ENCODE measurements at regions of chr6 and their contacts with region 1.

Region 1: GRCh38 chr6:71349395-71349794 is 60.8 kb downstream of the OGFRL1 start:
- DNase-seq: no peak
- H3K4me3 Mint-ChIP-seq: no peak overlapping the region
- H3K27ac Mint-ChIP-seq: no peak overlapping the region
- H3K4me1 Mint-ChIP-seq: no peaks in the 10 kb centered on the region
- H3K27me3 Mint-ChIP-seq: peaks cover 2% of the 10 kb centered on the region

Region 2: DNA sequence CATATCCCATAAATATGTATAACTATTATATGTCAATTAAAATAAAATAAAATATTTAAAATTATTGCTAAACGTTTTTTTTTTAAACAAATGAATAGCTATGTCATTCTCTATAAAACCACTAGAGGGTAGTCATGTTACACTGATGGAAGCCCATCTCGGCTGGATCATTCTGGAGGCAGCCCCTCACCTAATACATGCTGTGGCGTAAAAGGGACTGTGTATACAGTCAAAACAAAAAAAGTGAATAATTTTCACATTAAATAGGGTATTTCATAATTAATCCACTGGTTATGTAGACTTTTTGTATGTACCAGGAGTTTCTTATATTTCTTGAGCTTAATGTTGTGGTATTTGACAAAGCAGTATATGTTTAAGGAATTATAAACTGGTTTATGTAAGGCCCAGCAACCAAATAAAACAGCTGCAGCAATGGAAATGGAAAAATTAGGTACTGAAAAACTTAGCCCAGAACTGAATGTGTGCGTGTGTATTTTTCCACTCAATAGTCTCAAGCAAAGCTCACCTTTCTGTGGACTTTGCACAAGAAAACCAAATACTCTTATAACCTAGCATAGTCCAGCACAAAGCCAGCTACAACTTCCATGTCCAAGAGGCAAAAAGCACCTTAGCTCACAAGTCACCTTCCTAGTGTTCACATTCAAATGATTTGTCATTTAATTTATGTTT is 1128.2 kb before region 1 on chr6:
- intact Hi-C with region 1: loop called (anchors 5 kb)
- DNase-seq: no peak
- H3K4me3 Mint-ChIP-seq: no peak overlapping the region
- H3K27ac Mint-ChIP-seq: no peak overlapping the region
- H3K4me1 Mint-ChIP-seq: no peaks in the 10 kb centered on the region
- H3K27me3 Mint-ChIP-seq: peaks cover 4% of the 10 kb centered on the region

Region 3: DNA sequence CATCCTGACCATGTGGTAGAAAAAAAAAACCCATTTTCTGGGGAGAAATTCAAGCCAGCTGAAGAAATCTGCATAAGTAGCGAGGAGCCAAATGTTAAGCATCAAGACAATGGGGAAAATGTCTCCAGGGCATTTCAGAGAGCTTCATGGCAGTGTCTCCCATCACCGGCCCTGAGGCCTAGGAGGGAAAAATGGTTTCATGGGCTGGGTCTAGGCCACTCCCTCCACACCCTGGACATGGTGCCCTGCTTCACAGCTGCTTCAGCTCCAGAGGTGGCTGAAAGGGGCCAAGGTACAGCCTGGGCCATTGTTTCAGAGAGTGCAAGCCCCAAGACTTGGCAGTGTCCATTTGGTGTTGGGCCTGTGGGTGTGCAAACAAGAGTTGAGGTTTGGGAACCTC is 358.1 kb before region 1 on chr6:
- intact Hi-C with region 1: no loop called
- DNase-seq: no peak
- H3K4me3 Mint-ChIP-seq: no peak overlapping the region
- H3K27ac Mint-ChIP-seq: no peak overlapping the region
- H3K4me1 Mint-ChIP-seq: no peaks in the 10 kb centered on the region
- H3K27me3 Mint-ChIP-seq: peaks cover 2% of the 10 kb centered on the region

Region 4: GRCh38 chr6:71190809-71191208 is 158.6 kb before region 1 on chr6:
- intact Hi-C with region 1: loop called (anchors 1 kb)
- DNase-seq: no peak
- H3K4me3 Mint-ChIP-seq: no peak overlapping the region
- H3K27ac Mint-ChIP-seq: no peak overlapping the region
- H3K4me1 Mint-ChIP-seq: no peaks in the 10 kb centered on the region
- H3K27me3 Mint-ChIP-seq: peaks cover 4% of the 10 kb centered on the region

Region 5: DNA sequence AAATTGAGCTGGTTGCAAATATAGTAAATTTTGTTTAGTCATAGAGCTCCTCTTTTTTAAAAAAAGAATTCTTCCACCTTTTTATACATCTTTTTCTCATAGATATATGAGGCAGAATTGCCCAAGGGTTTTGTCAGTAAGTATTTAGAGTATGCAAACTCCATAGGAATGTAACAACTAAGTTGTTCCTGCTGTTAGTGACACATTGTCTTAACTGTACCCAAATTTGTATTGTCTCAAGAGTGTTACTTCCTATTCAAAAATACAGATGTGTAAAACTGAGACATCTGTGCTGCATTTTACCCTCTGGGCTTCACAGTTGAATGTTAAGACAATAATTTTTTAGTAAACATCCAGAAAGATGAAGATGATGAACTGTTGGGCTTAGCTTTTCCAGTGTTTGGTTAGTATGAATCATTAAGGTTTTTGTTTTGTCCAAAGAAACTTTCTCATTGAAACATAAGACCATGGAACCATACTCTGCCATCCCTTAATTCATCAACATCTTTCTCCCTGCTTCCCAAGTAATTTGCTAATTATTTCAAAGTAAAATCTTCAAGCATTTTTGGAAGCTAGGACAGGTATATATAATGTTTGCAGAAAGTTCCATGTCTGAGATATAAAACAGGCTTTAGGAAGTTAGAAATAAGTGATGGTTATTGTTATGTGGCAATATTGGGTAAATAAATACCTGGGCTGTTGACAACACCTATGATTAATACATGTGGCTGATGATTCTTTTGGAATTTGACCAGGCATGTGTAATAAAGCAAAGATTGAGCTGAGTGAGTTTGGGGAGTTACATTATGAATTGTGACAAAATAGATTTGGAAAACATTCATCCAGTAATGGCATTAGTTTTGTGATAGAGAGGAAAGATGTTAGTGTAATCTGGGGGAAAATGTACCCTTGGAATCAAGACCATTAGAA is 49.6 kb before region 1 on chr6:
- intact Hi-C with region 1: no loop called
- DNase-seq: no peak
- H3K4me3 Mint-ChIP-seq: no peak overlapping the region
- H3K27ac Mint-ChIP-seq: no peak overlapping the region
- H3K4me1 Mint-ChIP-seq: no peaks in the 10 kb centered on the region
- H3K27me3 Mint-ChIP-seq: no peaks in the 10 kb centered on the region

Region 6: DNA sequence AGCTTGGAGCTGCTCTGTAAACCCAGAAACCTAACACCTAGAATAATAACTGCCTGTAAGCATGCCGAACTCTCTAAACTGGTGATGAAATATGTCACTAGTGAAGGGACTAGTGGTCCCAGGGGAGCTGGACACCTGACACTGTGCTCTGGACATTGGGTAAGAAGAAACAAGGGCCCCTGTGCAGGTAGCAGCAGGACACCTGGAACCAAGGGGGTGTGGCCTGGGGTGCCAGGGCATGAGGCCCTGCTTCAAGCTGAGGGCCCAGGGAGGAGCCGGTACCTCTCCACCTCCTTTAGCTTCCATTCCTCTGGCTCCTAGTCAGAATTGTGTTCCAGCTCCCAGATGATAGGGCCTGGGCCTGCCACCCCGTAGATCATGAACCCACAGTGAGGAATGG is 202.4 kb after region 1 on chr6:
- intact Hi-C with region 1: no loop called
- DNase-seq: no peak
- H3K4me3 Mint-ChIP-seq: no peak overlapping the region
- H3K27ac Mint-ChIP-seq: no peak overlapping the region
- H3K4me1 Mint-ChIP-seq: no peaks in the 10 kb centered on the region
- H3K27me3 Mint-ChIP-seq: no peaks in the 10 kb centered on the region